ENCODE measurements at regions of chr18 and their contacts with region 1.

Region 1: DNA sequence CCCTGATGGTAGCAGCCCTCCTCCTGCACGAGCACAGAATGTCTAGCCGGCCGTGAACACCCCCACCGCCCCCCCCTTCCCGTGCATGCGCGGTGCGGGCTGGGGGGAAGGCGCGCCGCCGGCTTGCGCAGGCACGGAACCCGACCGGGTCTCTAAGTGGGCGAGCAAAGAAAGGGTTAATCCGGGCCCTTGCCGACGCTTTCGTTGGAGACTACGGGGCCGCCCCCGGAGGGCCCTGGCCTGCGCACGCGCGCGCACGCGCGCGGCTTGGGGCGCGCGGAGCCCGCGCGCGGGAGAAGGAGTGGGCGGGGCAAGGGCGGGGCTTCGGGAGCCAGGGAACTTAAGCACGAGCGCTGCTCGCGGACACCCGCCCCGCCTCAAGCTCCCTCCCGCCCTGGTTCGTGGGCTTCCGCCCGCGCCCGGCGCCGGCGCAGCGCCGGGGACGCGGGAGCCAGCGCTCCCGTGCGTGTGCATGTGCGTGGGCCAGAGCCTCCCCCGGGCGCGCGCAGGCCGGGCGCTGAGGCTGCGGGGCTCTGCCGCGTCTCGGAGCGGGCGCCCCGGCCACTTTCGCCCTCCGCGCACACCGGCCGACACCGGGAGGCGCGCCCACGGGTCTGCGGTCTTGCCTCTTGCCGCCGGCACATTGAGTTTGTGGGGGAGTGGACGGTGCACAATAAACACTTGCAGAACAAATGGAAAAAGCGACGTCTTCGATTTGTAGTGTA is 617 bp upstream of the ZBTB14 start:
- DNase-seq: peak; percentile 78
- ATAC-seq: peak; percentile 84
- H3K4me3 ChIP-seq: peak overlapping the region; percentile 67 to 81
- H3K27ac ChIP-seq: peak overlapping the region; percentile 81
- H3K4me1 ChIP-seq: peaks cover 5% of the 10 kb centered on the region; the same call in 1 of the 2 replicates
- H3K27me3 ChIP-seq: peaks cover 2% of the 10 kb centered on the region; the same call in 1 of the 2 replicates
- CTCF ChIP-seq: no peak

Region 2: DNA sequence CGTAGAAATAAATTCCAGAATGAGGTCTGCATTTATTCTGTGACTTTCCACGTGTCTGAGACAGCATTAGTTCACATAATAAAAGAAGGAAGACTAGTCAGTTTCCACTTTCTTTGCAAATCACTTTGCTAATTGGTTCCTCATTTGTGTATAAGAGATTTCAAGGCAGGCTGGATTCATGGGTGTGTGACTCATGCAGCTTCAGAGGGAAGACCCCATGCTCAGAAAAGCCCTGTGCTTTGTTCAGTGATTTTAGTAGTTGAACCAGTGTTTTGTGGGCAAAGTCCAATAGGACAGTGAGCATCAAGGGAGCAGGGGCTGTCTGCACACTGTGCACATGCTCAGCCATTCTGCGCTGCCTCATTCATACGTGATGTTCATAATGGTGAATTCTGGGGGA is 1138.8 kb before region 1 on chr18:
- CTCF ChIA-PET with region 1: no interaction called
- POLR2A ChIA-PET with region 1: no interaction called
- in situ Hi-C with region 1: no loop called
- intact Hi-C with region 1: no loop called
- DNase-seq: no peak
- ATAC-seq: no peak
- H3K4me3 ChIP-seq: no peak overlapping the region
- H3K27ac ChIP-seq: no peak overlapping the region
- H3K4me1 ChIP-seq: no peaks in the 10 kb centered on the region
- H3K27me3 ChIP-seq: no peaks in the 10 kb centered on the region
- CTCF ChIP-seq: no peak

Region 3: GRCh38 chr18:5237723-5238370 is 58.3 kb before region 1 on chr18:
- CTCF ChIA-PET with region 1: no interaction called
- POLR2A ChIA-PET with region 1: interaction called, 4 read pairs
- in situ Hi-C with region 1: no loop called
- intact Hi-C with region 1: loop called (anchors 5 kb)
- DNase-seq: peak; percentile 36
- ATAC-seq: peak; percentile 98
- H3K4me3 ChIP-seq: peak overlapping the region; percentile 80 to 88
- H3K27ac ChIP-seq: peak overlapping the region; percentile 85
- H3K4me1 ChIP-seq: peaks cover 7% of the 10 kb centered on the region
- H3K27me3 ChIP-seq: no peaks in the 10 kb centered on the region
- CTCF ChIP-seq: peak; percentile 16; the same call in 1 of the 2 replicates

Region 4: DNA sequence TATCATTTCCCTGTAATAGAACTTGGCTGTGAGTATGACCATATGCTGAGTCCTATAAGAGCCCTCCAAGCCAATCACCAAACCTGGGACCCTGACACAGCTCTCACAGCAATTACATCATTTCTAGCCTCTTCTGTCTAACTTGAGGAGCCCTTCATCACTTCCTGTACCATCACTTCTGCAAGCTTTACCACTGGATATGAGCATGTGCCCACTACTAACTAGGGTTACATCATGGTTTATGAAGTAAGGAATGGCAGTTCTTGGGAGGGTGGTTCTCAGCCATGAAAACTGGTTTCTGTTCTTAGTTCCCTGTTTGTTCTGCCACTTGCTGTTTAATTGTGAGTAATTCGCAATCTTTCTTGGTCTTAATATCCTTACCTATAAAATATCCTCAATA is 278.7 kb after region 1 on chr18:
- CTCF ChIA-PET with region 1: interaction called, 10 read pairs
- POLR2A ChIA-PET with region 1: no interaction called
- in situ Hi-C with region 1: no loop called
- intact Hi-C with region 1: no loop called
- DNase-seq: no peak
- ATAC-seq: no peak
- H3K4me3 ChIP-seq: no peak overlapping the region
- H3K27ac ChIP-seq: no peak overlapping the region
- H3K4me1 ChIP-seq: no peaks in the 10 kb centered on the region
- H3K27me3 ChIP-seq: no peaks in the 10 kb centered on the region
- CTCF ChIP-seq: no peak